HCT116 (cell line): ENCODE measurements at regions of chr9 and their contacts with region 1.

Region 1: GRCh38 chr9:123234853-123235252 is 33.5 kb downstream of the STRBP start:
- DNase-seq: no peak
- ATAC-seq: no peak
- H3K4me3 ChIP-seq: no peak overlapping the region
- H3K27ac ChIP-seq: no peak overlapping the region
- H3K4me1 ChIP-seq: no peaks in the 10 kb centered on the region
- H3K27me3 ChIP-seq: no peaks in the 10 kb centered on the region
- CTCF ChIP-seq: no peak
- POLR2A ChIP-seq: no peak
- RAD21 ChIP-seq: no peak

Region 2: GRCh38 chr9:122307925-122308324 is 926.9 kb before region 1 on chr9:
- CTCF ChIA-PET with region 1: no interaction called
- POLR2A ChIA-PET with region 1: no interaction called
- RAD21 ChIA-PET with region 1: no interaction called
- intact Hi-C with region 1: no loop called
- DNase-seq: no peak
- ATAC-seq: no peak
- H3K4me3 ChIP-seq: no peak overlapping the region
- H3K27ac ChIP-seq: no peak overlapping the region
- H3K4me1 ChIP-seq: no peaks in the 10 kb centered on the region
- H3K27me3 ChIP-seq: no peaks in the 10 kb centered on the region
- CTCF ChIP-seq: no peak
- POLR2A ChIP-seq: no peak
- RAD21 ChIP-seq: no peak

Region 3: DNA sequence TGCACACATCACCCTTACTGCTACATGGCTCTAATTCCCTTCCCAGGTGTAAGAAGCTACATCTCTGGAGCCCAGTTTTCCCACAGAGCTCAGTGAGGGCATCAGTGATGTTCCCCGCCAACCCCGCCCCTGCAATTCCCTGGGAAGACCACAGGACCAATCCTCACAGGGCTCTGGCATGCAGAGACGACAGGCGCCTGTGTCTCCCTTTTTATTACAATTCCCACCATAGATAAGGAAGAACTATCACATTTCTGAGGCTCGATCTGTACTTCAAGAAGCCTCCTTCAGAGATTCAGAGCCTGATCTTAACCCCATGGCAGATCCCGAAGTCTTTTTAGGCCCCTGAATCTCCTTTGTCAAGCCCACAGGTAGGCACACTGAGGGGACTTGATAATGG is 492.9 kb before region 1 on chr9 and contains the start of gene OR1L6:
- CTCF ChIA-PET with region 1: no interaction called
- POLR2A ChIA-PET with region 1: no interaction called
- RAD21 ChIA-PET with region 1: no interaction called
- intact Hi-C with region 1: no loop called
- DNase-seq: no peak
- ATAC-seq: no peak
- H3K4me3 ChIP-seq: no peak within 1 kb of the TSS
- H3K27ac ChIP-seq: no peak within 1 kb of the TSS
- H3K4me1 ChIP-seq: no peaks in the 10 kb centered on the region
- H3K27me3 ChIP-seq: peaks cover 37% of the 10 kb centered on the region
- CTCF ChIP-seq: no peak
- POLR2A ChIP-seq: no peak
- RAD21 ChIP-seq: no peak
- total RNA-seq, gene OR1L6: not detected

Region 4: GRCh38 chr9:123091459-123091858 is 143.4 kb before region 1 on chr9:
- CTCF ChIA-PET with region 1: no interaction called
- POLR2A ChIA-PET with region 1: no interaction called
- RAD21 ChIA-PET with region 1: no interaction called
- intact Hi-C with region 1: loop called (anchors 5 kb)
- DNase-seq: no peak
- ATAC-seq: peak; percentile 38
- H3K4me3 ChIP-seq: no peak overlapping the region
- H3K27ac ChIP-seq: no peak overlapping the region
- H3K4me1 ChIP-seq: no peaks in the 10 kb centered on the region
- H3K27me3 ChIP-seq: no peaks in the 10 kb centered on the region
- CTCF ChIP-seq: peak in 1 of 3 experiments; percentile 41; a peak in 2 of 6 replicates
- POLR2A ChIP-seq: no peak
- RAD21 ChIP-seq: no peak

Region 5: GRCh38 chr9:123375469-123376132 is 140.7 kb after region 1 on chr9:
- CTCF ChIA-PET with region 1: no interaction called
- POLR2A ChIA-PET with region 1: no interaction called
- RAD21 ChIA-PET with region 1: no interaction called
- intact Hi-C with region 1: no loop called
- DNase-seq: no peak
- ATAC-seq: peak; percentile 62
- H3K4me3 ChIP-seq: no peak overlapping the region
- H3K27ac ChIP-seq: peak overlapping the region; percentile 31; the same call in 1 of the 2 replicates
- H3K4me1 ChIP-seq: peaks cover 15 to 16% of the 10 kb centered on the region in 2 experiments
- H3K27me3 ChIP-seq: no peaks in the 10 kb centered on the region
- CTCF ChIP-seq: no peak
- POLR2A ChIP-seq: no peak
- RAD21 ChIP-seq: no peak

Region 6: DNA sequence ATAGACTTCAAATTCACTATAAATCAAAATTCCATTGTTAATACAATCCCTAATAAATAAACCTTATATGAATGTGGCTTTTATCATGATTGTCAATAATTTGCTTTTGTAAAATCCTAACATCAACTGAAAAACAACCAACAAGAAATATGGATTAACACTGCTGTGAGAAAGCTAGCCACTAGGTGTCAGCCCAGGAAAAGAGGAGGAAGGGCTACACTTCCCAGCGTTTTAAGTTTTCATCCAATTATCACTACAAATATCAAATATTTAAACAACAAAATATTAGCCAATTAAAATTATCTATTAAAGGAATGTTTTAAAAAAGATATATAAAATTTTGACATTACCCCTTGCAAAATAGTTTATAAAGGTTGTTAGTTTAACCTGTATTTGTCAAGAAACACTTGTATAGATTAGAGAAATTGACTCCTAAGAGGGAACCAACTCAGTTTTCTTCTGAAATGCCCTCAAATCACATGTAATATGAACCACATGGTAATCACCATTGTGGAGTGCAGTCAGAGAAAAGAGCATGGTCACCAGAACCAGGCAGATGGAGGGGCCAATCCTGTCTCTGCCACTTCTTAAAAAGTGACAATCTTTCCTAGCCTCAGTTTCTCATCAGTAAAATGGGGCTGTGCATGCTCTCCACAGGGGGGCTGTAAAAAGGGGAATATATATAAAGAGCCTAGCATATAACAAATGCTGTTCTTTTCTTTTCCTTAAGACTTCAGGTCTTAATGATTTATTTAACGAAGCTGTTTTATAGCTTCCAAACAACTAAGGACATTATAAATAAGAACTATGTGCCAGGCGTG is 309.4 kb after region 1 on chr9:
- CTCF ChIA-PET with region 1: no interaction called
- POLR2A ChIA-PET with region 1: no interaction called
- RAD21 ChIA-PET with region 1: no interaction called
- intact Hi-C with region 1: no loop called
- DNase-seq: peak; percentile 12
- ATAC-seq: peak; percentile 63; the same call in 1 of the 2 replicates
- H3K4me3 ChIP-seq: no peak overlapping the region
- H3K27ac ChIP-seq: no peak overlapping the region
- H3K4me1 ChIP-seq: no peaks in the 10 kb centered on the region
- H3K27me3 ChIP-seq: no peaks in the 10 kb centered on the region
- CTCF ChIP-seq: peak; percentile 81 to 83 (median 83)
- POLR2A ChIP-seq: no peak
- RAD21 ChIP-seq: peak; percentile 94